ENCODE measurements at regions of chr13 and their contacts with region 1.

Region 1: GRCh38 chr13:30802953-30803478 is 67.7 kb downstream of the ALOX5AP start:
- DNase-seq: peak; percentile 73 to 90
- ATAC-seq: peak; percentile 92 to 99 (median 99)
- H3K4me3 ChIP-seq: peak overlapping the region; percentile 21
- H3K4me3 Mint-ChIP-seq: peak overlapping the region; percentile 66
- H3K27ac ChIP-seq: no peak overlapping the region
- H3K27ac Mint-ChIP-seq: peak overlapping the region in 1 of 2 donors; percentile 81
- H3K4me1 ChIP-seq: peaks cover 10% of the 10 kb centered on the region
- H3K4me1 Mint-ChIP-seq: peaks cover 14% of the 10 kb centered on the region in 2 donors
- H3K27me3 ChIP-seq: no peaks in the 10 kb centered on the region
- H3K27me3 Mint-ChIP-seq: no peaks in the 10 kb centered on the region
- CTCF ChIP-seq: peak; percentile 98

Region 2: DNA sequence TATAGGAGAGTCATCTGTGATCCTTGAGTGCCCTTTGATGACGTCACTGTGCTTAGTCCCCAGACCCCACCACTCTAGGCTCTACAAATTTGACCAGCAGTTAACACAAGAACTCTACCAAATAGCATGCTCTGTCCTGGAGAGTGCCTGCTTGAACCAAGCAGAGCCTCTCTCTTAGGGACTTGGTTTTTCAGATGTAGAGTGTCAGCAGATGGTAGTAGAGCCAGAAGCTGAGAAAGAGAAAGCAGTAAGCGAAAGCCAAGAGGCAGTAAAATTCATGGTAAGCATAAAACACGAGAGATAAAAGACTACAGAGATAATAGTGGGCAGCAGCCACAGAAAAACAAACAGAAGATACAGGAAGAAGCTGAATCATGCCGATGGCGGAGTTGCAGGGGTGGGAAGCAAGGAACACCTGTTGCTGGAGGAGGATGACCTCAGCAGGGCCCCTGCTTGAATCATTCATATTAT is 1400.8 kb before region 1 on chr13:
- intact Hi-C with region 1: no loop called
- DNase-seq: no peak
- ATAC-seq: peak in 1 of 3 donors; percentile 3
- H3K4me3 ChIP-seq: no peak overlapping the region
- H3K4me3 Mint-ChIP-seq: no peak overlapping the region
- H3K27ac ChIP-seq: no peak overlapping the region
- H3K27ac Mint-ChIP-seq: no peak overlapping the region
- H3K4me1 ChIP-seq: no peaks in the 10 kb centered on the region
- H3K4me1 Mint-ChIP-seq: no peaks in the 10 kb centered on the region
- H3K27me3 ChIP-seq: no peaks in the 10 kb centered on the region
- H3K27me3 Mint-ChIP-seq: peaks cover 0 to 10% of the 10 kb centered on the region in 2 donors
- CTCF ChIP-seq: no peak

Region 3: DNA sequence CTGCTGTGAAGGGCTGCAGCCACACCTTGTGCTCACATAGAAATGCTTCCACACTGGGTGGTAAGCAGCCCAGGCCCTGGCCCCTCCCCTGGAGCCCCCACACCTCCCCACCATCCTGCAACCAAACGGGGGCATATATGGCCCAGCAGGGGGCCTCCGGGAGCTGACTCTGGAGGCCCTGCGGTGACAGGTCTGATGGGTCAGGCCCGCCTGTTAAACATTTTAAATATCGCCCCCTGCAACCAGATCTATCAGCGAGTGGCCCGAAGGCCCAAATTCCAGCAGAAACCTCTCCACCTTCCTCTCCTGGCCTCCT is 447.7 kb before region 1 on chr13:
- intact Hi-C with region 1: loop called (anchors 2 kb)
- DNase-seq: peak; percentile 51 to 65
- ATAC-seq: peak; percentile 58 to 94 (median 85)
- H3K4me3 ChIP-seq: no peak overlapping the region
- H3K4me3 Mint-ChIP-seq: no peak overlapping the region
- H3K27ac ChIP-seq: no peak overlapping the region
- H3K27ac Mint-ChIP-seq: no peak overlapping the region
- H3K4me1 ChIP-seq: peaks cover 18% of the 10 kb centered on the region
- H3K4me1 Mint-ChIP-seq: peaks cover 7 to 17% of the 10 kb centered on the region in 2 donors
- H3K27me3 ChIP-seq: no peaks in the 10 kb centered on the region
- H3K27me3 Mint-ChIP-seq: peaks cover 0 to 3% of the 10 kb centered on the region in 2 donors
- CTCF ChIP-seq: peak; percentile 51

Region 4: GRCh38 chr13:30572859-30573275 is 230.1 kb before region 1 on chr13:
- intact Hi-C with region 1: loop called (anchors 5 kb)
- DNase-seq: peak in 1 of 2 donors; percentile 67
- ATAC-seq: peak; percentile 69 to 77 (median 69)
- H3K4me3 ChIP-seq: peak overlapping the region; percentile 5
- H3K4me3 Mint-ChIP-seq: peak overlapping the region; percentile 75
- H3K27ac ChIP-seq: peak overlapping the region; percentile 66
- H3K27ac Mint-ChIP-seq: peak overlapping the region; percentile 80 to 83
- H3K4me1 ChIP-seq: peaks cover 25% of the 10 kb centered on the region
- H3K4me1 Mint-ChIP-seq: peaks cover 33 to 40% of the 10 kb centered on the region in 2 donors
- H3K27me3 ChIP-seq: no peaks in the 10 kb centered on the region
- H3K27me3 Mint-ChIP-seq: peaks cover 21 to 25% of the 10 kb centered on the region in 2 donors
- CTCF ChIP-seq: no peak

Region 5: DNA sequence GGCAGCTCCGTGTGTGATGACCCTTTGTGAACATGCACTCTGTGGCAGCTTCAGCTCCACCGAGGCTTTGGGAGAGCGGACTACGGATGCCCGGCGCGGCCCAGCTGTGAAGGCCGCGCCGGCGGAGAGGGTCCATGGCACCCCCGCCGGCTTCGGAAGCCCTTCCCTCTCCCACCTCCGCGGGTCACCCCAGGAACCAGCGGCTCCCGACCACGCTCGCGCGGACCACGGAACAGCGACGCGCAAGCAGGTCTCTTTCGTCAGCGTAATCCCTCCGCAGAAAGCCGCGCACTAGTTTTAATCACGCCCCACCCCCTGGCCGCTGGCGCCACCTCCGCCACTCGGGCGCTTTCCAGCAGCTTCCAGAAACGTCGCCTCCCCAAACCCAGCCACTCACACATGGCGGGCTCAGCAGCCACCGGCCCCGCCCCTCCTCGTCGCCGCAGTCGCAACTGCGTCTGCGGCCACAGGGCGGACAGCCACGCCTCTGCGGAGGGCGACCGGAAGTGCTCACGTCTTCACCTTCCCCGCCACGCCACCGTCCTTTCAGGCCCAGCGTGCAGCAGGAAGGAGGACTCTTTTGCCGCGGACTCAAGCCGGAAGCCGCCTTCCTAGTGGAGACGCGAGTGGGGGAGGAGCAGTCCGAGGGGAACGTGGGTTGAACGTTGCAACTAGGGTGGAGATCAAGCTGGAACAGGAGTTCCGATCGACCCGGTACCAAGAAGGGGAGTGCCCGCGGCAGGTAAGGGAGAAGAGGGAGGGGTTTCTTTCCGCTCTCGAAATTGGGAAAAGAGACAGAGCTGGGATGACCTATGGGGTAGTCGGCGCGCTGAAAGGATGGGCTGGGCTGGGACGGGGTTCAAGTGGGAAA is 185.5 kb before region 1 on chr13 and contains the start of gene USPL1:
- intact Hi-C with region 1: loop called (anchors 5 kb)
- DNase-seq: peak; percentile 98 to 100
- ATAC-seq: peak; percentile 84 to 96 (median 88)
- H3K4me3 ChIP-seq: peak within 1 kb of the TSS; percentile 100
- H3K4me3 Mint-ChIP-seq: no peak within 1 kb of the TSS
- H3K27ac ChIP-seq: peak within 1 kb of the TSS; percentile 98
- H3K27ac Mint-ChIP-seq: no peak within 1 kb of the TSS
- H3K4me1 ChIP-seq: peaks cover 7% of the 10 kb centered on the region
- H3K4me1 Mint-ChIP-seq: peaks cover 0 to 5% of the 10 kb centered on the region in 2 donors
- H3K27me3 ChIP-seq: no peaks in the 10 kb centered on the region
- H3K27me3 Mint-ChIP-seq: no peaks in the 10 kb centered on the region
- CTCF ChIP-seq: no peak
- total RNA-seq, gene USPL1: 34.8 to 39.0 (median 36.9) TPM

Region 6: GRCh38 chr13:30679483-30680330 is 123.3 kb before region 1 on chr13:
- intact Hi-C with region 1: loop called (anchors 1 kb)
- DNase-seq: peak in 1 of 2 donors; percentile 65
- ATAC-seq: peak; percentile 75 to 95 (median 94)
- H3K4me3 ChIP-seq: no peak overlapping the region
- H3K4me3 Mint-ChIP-seq: no peak overlapping the region
- H3K27ac ChIP-seq: no peak overlapping the region
- H3K27ac Mint-ChIP-seq: peak overlapping the region in 1 of 2 donors; percentile 8
- H3K4me1 ChIP-seq: no peaks in the 10 kb centered on the region
- H3K4me1 Mint-ChIP-seq: peaks cover 13% of the 10 kb centered on the region in 2 donors
- H3K27me3 ChIP-seq: no peaks in the 10 kb centered on the region
- H3K27me3 Mint-ChIP-seq: no peaks in the 10 kb centered on the region
- CTCF ChIP-seq: peak; percentile 56

Measured in natural killer cell (primary cell).